PC-3 (cell line): ENCODE measurements at regions of chr5 and their contacts with region 1.

Region 1: GRCh38 chr5:68884883-68885282 is 208.9 kb upstream of the SLC30A5 start:
- DNase-seq: peak; percentile 48
- ATAC-seq: peak; percentile 64; the same call in 1 of the 2 replicates
- H3K4me3 ChIP-seq: no peak overlapping the region
- H3K27ac ChIP-seq: no peak overlapping the region
- H3K4me1 ChIP-seq: no peaks in the 10 kb centered on the region
- H3K27me3 ChIP-seq: no peaks in the 10 kb centered on the region
- CTCF ChIP-seq: peak; percentile 57

Region 2: GRCh38 chr5:68683632-68684036 is 201.2 kb before region 1 on chr5:
- CTCF ChIA-PET with region 1: no interaction called
- POLR2A ChIA-PET with region 1: no interaction called
- intact Hi-C with region 1: no loop called
- DNase-seq: peak; percentile 86
- ATAC-seq: peak; percentile 86
- H3K4me3 ChIP-seq: no peak overlapping the region
- H3K27ac ChIP-seq: peak overlapping the region; percentile 32; the same call in 1 of the 2 replicates
- H3K4me1 ChIP-seq: peaks cover 10% of the 10 kb centered on the region
- H3K27me3 ChIP-seq: no peaks in the 10 kb centered on the region
- CTCF ChIP-seq: no peak

Region 3: GRCh38 chr5:68962757-68963484 is 78.0 kb after region 1 on chr5:
- CTCF ChIA-PET with region 1: interaction called, 6 read pairs
- POLR2A ChIA-PET with region 1: no interaction called
- intact Hi-C with region 1: loop called (anchors 1 kb)
- DNase-seq: peak; percentile 77
- ATAC-seq: peak; percentile 94
- H3K4me3 ChIP-seq: peak overlapping the region; percentile 44; the same call in 1 of the 2 replicates
- H3K27ac ChIP-seq: no peak overlapping the region
- H3K4me1 ChIP-seq: 0 out of 2 replicates have a peak, but pooled peaks cover 3% of the 10 kb centered on the region
- H3K27me3 ChIP-seq: no peaks in the 10 kb centered on the region
- CTCF ChIP-seq: peak; percentile 86